CD8-positive, alpha-beta T cell (primary cell): ENCODE measurements at regions of chr1 and their contacts with region 1.

Region 1: DNA sequence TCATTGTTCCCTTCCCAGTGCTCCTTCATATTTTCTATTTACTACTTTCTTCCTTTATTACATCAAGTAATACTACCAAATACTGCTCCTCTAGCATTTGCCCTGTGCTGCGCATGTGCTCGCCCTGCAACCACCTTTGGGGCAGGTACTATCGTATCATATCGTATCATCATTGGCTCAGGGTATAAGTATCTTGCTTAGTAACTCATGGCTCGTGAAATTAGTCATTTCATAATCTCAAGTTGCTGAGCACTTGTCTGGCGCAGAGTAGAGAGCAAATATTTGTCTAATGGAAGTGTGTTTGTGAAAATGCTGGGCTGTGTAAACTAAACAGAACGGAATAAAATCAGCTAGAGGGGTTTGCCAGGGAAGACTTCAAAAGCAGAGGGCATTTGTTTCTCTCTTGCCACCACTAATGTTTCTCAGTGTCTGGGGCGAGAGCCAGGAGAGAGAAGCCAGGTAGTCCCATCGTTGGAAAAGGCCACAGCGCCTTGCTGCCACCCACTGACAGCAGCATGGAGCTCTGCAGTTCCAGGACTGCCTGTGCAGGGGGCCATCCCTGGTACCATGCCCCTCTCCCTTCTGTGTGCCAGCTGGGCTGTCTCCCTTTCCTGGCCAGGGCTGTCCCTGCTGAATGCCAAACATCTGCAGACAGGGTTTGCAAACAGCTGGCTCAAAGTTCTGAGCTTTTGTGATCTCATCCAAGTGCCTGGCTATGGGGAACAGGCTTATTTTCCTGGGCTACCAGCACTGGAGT is 20.0 kb upstream of the CPT2 start:
- DNase-seq: no peak
- ATAC-seq: no peak
- H3K4me3 ChIP-seq: no peak overlapping the region
- H3K4me3 Mint-ChIP-seq: no peak overlapping the region
- H3K27ac ChIP-seq: no peak overlapping the region
- H3K27ac Mint-ChIP-seq: no peak overlapping the region
- H3K4me1 ChIP-seq: no peaks in the 10 kb centered on the region
- H3K4me1 Mint-ChIP-seq: peaks cover 3% of the 10 kb centered on the region
- H3K27me3 ChIP-seq: no peaks in the 10 kb centered on the region
- H3K27me3 Mint-ChIP-seq: peaks cover 20% of the 10 kb centered on the region
- CTCF ChIP-seq: no peak

Region 2: DNA sequence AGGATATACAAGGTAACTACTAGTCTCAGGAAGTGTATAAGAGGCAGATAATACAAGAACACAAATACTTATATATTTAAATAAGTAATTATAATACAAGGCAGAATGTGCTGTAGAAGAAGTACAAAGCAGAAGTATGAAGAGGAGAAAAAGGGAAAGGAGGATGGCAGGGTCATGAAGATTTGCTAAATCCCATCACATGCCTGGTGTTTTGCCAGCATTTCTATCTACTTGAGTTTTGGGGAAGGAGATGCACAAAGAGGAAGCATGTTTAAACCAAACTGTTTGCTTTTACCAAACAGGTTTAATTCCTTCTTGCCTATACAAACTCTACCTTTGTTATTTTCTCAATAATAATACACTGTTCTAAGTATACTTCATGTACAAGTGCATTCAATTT is 175.5 kb before region 1 on chr1:
- CTCF ChIA-PET with region 1: no interaction called
- POLR2A ChIA-PET with region 1: no interaction called
- intact Hi-C with region 1: loop called in 1 of 2 experiments (anchors 5 kb)
- DNase-seq: no peak
- ATAC-seq: no peak
- H3K4me3 ChIP-seq: no peak overlapping the region
- H3K4me3 Mint-ChIP-seq: no peak overlapping the region
- H3K27ac ChIP-seq: no peak overlapping the region
- H3K27ac Mint-ChIP-seq: no peak overlapping the region
- H3K4me1 ChIP-seq: no peaks in the 10 kb centered on the region
- H3K4me1 Mint-ChIP-seq: no peaks in the 10 kb centered on the region
- H3K27me3 ChIP-seq: no peaks in the 10 kb centered on the region
- H3K27me3 Mint-ChIP-seq: no peaks in the 10 kb centered on the region
- CTCF ChIP-seq: no peak